ENCODE measurements at regions of chr13 and their contacts with region 1.

Region 1: DNA sequence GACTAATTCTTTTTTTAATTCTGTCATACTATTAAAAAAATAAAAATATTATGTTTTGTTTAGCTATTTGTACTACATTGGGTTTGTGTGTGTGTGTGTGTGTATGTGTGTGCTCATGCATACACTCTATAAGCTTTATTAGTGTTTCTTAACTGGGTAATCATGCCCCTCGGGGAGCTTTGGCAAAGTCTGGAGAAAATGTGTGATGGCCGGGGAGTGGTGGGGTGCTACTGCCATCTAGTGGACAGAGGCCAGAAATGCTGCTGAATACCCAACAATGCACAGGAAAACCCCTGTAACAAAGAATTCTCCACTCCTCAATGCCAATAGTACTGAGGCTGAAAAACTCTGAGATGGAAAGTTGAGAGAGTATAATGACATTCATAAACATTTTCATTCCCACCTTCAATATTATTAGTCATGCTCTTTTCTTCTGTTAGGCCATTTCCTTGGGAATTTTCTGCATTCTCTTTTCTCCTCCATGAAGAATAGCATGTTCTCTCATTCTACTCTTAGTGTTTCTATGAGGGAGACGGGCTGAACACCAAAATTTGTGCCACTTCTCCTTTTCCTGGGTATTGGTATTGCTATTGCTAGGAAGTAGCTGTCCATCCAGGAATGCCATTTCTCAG is 157.3 kb downstream of the DNAJC3 start:
- DNase-seq: peak; percentile 28
- ATAC-seq: peak; percentile 97
- H3K4me3 ChIP-seq: no peak overlapping the region
- H3K27ac ChIP-seq: no peak overlapping the region
- H3K4me1 ChIP-seq: no peaks in the 10 kb centered on the region
- H3K27me3 ChIP-seq: no peaks in the 10 kb centered on the region
- CTCF ChIP-seq: peak; percentile 89 to 98 (median 94)
- EP300 ChIP-seq: no peak
- POLR2A ChIP-seq: no peak
- RAD21 ChIP-seq: peak; percentile 96

Region 2: DNA sequence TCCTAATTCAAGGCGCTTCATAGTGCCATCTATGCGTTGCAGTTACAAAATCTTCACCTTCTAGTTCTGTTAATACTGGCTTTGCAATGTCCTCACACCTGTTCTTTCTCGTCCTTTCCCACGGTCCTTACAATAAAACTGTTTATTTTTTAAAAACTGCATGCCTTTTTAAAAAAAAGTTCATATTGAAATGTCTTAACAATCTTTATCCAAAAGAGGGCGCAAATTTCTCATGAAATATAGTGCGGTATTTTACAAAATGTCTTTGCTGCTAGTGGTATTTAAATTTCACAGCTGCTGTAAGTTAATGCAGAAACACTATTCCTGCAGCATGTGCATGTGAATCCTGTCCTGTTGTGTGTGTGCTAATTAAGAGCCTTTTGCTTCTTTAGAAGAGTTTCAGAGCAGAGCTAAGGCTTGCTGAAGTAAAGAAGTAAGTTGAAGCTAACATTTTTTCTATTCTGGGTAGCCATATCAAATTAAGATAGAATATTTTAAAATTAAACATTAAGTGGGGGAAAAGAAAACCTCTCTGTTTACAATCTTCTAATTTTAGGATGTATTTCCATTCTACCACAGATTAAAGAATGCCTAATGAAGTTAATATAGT is 297.5 kb before region 1 on chr13:
- CTCF ChIA-PET with region 1: interaction called, 110 read pairs
- POLR2A ChIA-PET with region 1: no interaction called
- RAD21 ChIA-PET with region 1: interaction called, 31 read pairs
- SMC1A ChIA-PET with region 1: interaction called, 51 read pairs
- in situ Hi-C with region 1: loop called (anchors 5 kb)
- intact Hi-C with region 1: loop called (anchors 1 kb)
- DNase-seq: no peak
- ATAC-seq: peak; percentile 34; the same call in 2 of the 3 replicates
- H3K4me3 ChIP-seq: no peak overlapping the region
- H3K27ac ChIP-seq: no peak overlapping the region
- H3K4me1 ChIP-seq: no peaks in the 10 kb centered on the region
- H3K27me3 ChIP-seq: no peaks in the 10 kb centered on the region
- CTCF ChIP-seq: peak; percentile 34 to 50 (median 47); a peak in 5 of 6 replicates
- EP300 ChIP-seq: no peak
- POLR2A ChIP-seq: no peak
- RAD21 ChIP-seq: peak; percentile 51

Region 3: DNA sequence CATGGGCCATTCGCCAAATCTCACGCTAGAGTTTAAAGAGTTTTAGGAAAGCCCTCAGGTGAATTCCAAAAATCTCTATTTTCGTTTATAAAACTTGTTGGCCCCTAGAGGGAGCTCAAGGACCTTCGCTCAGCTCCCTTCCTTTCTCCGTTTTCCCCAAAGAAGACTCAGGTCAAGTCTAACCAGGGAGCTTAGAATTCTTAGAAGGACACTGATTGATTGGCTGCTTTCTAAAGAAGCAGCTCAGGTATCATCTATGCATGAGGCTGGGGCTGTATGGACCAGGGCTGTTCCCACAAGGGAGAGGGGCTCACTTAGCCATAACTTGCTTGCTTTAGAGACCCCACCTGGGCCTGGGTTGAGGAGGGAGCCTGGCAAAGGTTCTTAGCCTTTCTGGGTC is 210.2 kb before region 1 on chr13:
- CTCF ChIA-PET with region 1: interaction called, 192 read pairs
- POLR2A ChIA-PET with region 1: interaction called, 5 read pairs
- RAD21 ChIA-PET with region 1: interaction called, 101 read pairs
- SMC1A ChIA-PET with region 1: interaction called, 139 read pairs
- in situ Hi-C with region 1: loop called (anchors 25 kb)
- intact Hi-C with region 1: loop called (anchors 1 kb)
- DNase-seq: no peak
- ATAC-seq: peak; percentile 77
- H3K4me3 ChIP-seq: no peak overlapping the region
- H3K27ac ChIP-seq: no peak overlapping the region
- H3K4me1 ChIP-seq: no peaks in the 10 kb centered on the region
- H3K27me3 ChIP-seq: no peaks in the 10 kb centered on the region
- CTCF ChIP-seq: peak; percentile 66 to 79 (median 68)
- EP300 ChIP-seq: no peak
- POLR2A ChIP-seq: no peak
- RAD21 ChIP-seq: peak; percentile 90

Region 4: GRCh38 chr13:95676762-95677563 is 157.3 kb before region 1 on chr13 and contains the start of gene DNAJC3:
- CTCF ChIA-PET with region 1: interaction called, 7 read pairs
- POLR2A ChIA-PET with region 1: no interaction called
- RAD21 ChIA-PET with region 1: no interaction called
- SMC1A ChIA-PET with region 1: no interaction called
- in situ Hi-C with region 1: no loop called
- intact Hi-C with region 1: loop called (anchors 5 kb)
- DNase-seq: peak; percentile 87
- ATAC-seq: peak; percentile 95
- H3K4me3 ChIP-seq: peak within 1 kb of the TSS; percentile 94
- H3K27ac ChIP-seq: peak within 1 kb of the TSS; percentile 90
- H3K4me1 ChIP-seq: no peaks in the 10 kb centered on the region
- H3K27me3 ChIP-seq: no peaks in the 10 kb centered on the region
- CTCF ChIP-seq: no peak
- EP300 ChIP-seq: no peak
- POLR2A ChIP-seq: peak; percentile 98
- RAD21 ChIP-seq: no peak
- polyA plus RNA-seq, gene DNAJC3: 9.3 to 19.0 TPM

Region 5: DNA sequence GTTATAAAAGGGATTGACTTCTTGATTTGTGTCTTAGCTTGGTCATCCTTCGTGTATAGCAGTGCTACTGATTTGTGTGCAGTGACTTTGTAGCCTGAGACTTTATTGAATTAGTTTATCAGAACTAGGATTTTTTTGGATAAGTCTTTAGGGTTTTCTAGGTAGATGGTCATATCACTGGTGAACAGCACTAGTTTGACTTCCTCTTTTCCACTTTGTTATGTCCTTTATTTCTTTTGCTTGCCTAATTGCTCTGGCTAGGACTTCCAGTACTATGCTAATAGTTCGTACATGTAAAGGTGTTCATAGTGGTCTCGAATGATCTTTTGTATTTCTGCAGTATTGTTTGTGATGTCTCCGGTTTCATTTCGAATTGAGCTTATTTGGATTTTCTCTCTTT is 11.9 kb before region 1 on chr13:
- CTCF ChIA-PET with region 1: interaction called, 44 read pairs
- POLR2A ChIA-PET with region 1: no interaction called
- RAD21 ChIA-PET with region 1: interaction called, 5 read pairs
- SMC1A ChIA-PET with region 1: interaction called, 21 read pairs
- in situ Hi-C with region 1: no loop called
- intact Hi-C with region 1: no loop called
- DNase-seq: no peak
- ATAC-seq: no peak
- H3K4me3 ChIP-seq: no peak overlapping the region
- H3K27ac ChIP-seq: no peak overlapping the region
- H3K4me1 ChIP-seq: no peaks in the 10 kb centered on the region
- H3K27me3 ChIP-seq: no peaks in the 10 kb centered on the region
- CTCF ChIP-seq: no peak
- EP300 ChIP-seq: no peak
- POLR2A ChIP-seq: no peak
- RAD21 ChIP-seq: no peak